Brain microvascular endothelial cell (primary cell): ENCODE measurements at regions of chr1 and their contacts with region 1.

Region 1: GRCh38 chr1:162847839-162848453 is 13.0 kb downstream of the CCDC190 start:
- DNase-seq: peak; percentile 68
- H3K4me3 ChIP-seq: no peak overlapping the region
- H3K27ac ChIP-seq: no peak overlapping the region
- H3K27me3 ChIP-seq: no peaks in the 10 kb centered on the region
- CTCF ChIP-seq: peak; percentile 87

Region 2: DNA sequence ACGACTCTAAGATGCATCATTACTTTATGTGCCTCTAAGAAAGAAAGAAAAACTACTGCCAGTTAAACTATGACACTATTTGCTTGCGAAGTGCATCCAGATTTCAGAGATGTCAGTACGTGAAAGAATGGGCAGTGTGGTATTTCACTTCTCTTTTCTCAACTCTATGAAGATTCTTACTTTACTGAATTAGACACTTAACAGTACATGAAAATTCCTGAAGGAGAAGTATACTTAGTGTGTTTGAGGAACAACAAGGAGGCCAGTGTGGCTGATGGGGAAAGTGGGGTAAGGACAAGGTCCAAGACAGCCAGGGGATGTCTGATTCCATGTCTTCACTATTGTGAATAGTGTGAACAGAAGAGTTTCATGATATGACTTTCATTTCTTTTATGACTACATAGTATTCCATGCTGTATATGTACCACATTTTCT is 111.3 kb before region 1 on chr1:
- in situ Hi-C with region 1: no loop called
- DNase-seq: no peak
- H3K4me3 ChIP-seq: no peak overlapping the region
- H3K27ac ChIP-seq: no peak overlapping the region
- H3K27me3 ChIP-seq: no peaks in the 10 kb centered on the region
- CTCF ChIP-seq: no peak

Region 3: GRCh38 chr1:163174524-163175437 is 326.8 kb after region 1 on chr1:
- in situ Hi-C with region 1: loop called (anchors 25 kb)
- DNase-seq: peak; percentile 71
- H3K4me3 ChIP-seq: no peak overlapping the region
- H3K27ac ChIP-seq: no peak overlapping the region
- H3K27me3 ChIP-seq: no peaks in the 10 kb centered on the region
- CTCF ChIP-seq: peak; percentile 96